PC-3 (cell line): ENCODE measurements at regions of chr1 and their contacts with region 1.

Region 1: DNA sequence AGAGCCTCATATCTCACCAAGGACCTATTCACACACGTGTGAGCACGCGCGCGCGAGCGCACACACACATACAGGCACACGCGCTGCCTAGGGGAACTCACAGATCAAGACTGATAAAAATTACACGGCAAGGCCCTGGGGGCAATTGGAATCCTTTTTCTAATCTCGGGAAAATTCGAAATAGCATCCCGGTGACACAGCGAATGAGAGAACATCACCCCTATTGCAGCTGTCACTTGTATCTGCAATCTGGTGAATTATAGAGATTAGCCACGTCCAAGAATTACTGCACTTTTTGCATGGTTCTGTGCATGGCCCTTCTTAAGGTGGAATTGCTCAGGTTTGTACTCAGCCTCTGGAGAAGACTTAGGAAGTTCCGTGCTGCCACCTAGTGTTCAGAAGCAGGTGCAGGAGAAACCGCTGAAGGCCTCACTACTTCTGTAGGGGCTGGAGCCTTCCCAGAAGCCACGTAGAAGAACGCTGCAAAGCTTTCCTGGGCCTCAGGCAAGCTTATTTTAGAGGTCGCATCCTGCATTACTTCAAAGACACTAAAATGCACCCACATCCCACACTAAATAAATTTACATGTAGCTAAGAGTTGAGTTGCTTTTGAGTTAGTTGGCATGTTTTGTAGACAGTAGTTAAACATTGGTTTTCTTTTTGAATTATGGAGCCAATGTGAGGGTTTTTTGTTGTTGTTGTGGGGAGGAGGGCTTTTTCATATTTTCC is 229.2 kb upstream of the CAMK1G start:
- DNase-seq: peak; percentile 98
- ATAC-seq: peak; percentile 93
- H3K4me3 ChIP-seq: no peak overlapping the region
- H3K27ac ChIP-seq: peak overlapping the region; percentile 19; the same call in 1 of the 2 replicates
- H3K4me1 ChIP-seq: peaks cover 36% of the 10 kb centered on the region
- H3K27me3 ChIP-seq: no peaks in the 10 kb centered on the region
- CTCF ChIP-seq: peak; percentile 97

Region 2: GRCh38 chr1:208652296-208653160 is 701.7 kb before region 1 on chr1:
- CTCF ChIA-PET with region 1: no interaction called
- POLR2A ChIA-PET with region 1: no interaction called
- intact Hi-C with region 1: loop called (anchors 1 kb)
- DNase-seq: peak; percentile 89
- ATAC-seq: peak; percentile 90
- H3K4me3 ChIP-seq: no peak overlapping the region
- H3K27ac ChIP-seq: no peak overlapping the region
- H3K4me1 ChIP-seq: peaks cover 19% of the 10 kb centered on the region
- H3K27me3 ChIP-seq: no peaks in the 10 kb centered on the region
- CTCF ChIP-seq: peak; percentile 95

Region 3: DNA sequence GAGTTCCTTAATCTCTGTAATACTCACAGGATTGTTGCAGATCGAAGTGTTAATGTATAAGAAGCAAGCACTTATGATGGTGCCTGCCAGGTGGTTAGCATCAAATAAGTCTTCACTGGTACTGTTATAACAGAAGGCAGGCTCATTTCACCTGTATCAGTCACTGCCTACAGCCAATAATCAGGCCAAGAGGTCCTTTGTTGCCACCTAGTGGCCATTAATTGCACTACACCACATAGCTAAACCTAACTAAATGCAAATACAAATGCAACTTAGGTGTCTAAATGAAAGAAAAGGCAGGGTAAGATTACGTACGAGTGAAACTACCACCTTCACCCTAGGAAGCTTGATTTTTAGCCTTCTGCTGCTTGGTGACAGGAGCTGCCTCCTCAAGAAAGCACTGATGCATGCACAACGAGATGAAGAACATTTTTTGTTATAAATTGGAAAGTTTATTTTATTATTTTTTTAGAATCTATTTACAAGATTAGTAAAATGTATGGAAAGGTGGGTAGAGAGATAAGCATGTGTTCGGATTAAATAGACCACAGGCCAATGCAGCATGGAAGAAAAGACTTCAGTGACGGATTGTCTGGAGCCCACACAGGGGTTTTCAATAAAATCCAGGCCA is 105.5 kb before region 1 on chr1:
- CTCF ChIA-PET with region 1: interaction called, 14 read pairs
- POLR2A ChIA-PET with region 1: no interaction called
- intact Hi-C with region 1: loop called (anchors 1 kb)
- DNase-seq: peak; percentile 97
- ATAC-seq: peak; percentile 58
- H3K4me3 ChIP-seq: no peak overlapping the region
- H3K27ac ChIP-seq: no peak overlapping the region
- H3K4me1 ChIP-seq: peaks cover 44% of the 10 kb centered on the region
- H3K27me3 ChIP-seq: no peaks in the 10 kb centered on the region
- CTCF ChIP-seq: peak; percentile 98

Region 4: GRCh38 chr1:209405183-209405814 is 51.0 kb after region 1 on chr1:
- CTCF ChIA-PET with region 1: no interaction called
- POLR2A ChIA-PET with region 1: interaction called, 6 read pairs
- intact Hi-C with region 1: loop called (anchors 2 kb)
- DNase-seq: peak; percentile 94
- ATAC-seq: peak; percentile 41
- H3K4me3 ChIP-seq: peak overlapping the region; percentile 53
- H3K27ac ChIP-seq: peak overlapping the region; percentile 96
- H3K4me1 ChIP-seq: peaks cover 71% of the 10 kb centered on the region
- H3K27me3 ChIP-seq: no peaks in the 10 kb centered on the region
- CTCF ChIP-seq: no peak

Region 5: DNA sequence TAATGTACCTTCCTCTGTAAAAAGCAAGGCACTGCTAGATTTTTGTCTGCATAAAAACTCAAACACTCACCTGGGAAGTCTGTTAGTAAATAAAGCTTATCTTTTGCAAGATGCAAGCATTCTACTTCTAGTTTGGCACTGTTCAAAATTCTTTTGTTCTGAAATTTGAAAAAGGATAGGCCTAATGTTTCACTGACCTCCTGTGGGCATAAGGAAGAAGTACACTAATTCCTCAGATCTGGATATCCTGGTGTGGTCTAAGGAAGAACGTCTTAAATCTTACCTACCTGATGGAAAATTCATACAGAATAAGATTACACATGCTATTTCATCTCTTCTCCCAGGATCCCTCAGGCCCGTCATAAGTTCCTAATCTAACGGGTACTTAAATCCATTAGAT is 135.7 kb after region 1 on chr1:
- CTCF ChIA-PET with region 1: interaction called, 3 read pairs
- POLR2A ChIA-PET with region 1: no interaction called
- intact Hi-C with region 1: loop called (anchors 1 kb)
- DNase-seq: peak; percentile 82
- ATAC-seq: peak; percentile 83
- H3K4me3 ChIP-seq: no peak overlapping the region
- H3K27ac ChIP-seq: no peak overlapping the region
- H3K4me1 ChIP-seq: peaks cover 14% of the 10 kb centered on the region; the same call in 1 of the 2 replicates
- H3K27me3 ChIP-seq: no peaks in the 10 kb centered on the region
- CTCF ChIP-seq: peak; percentile 94

Region 6: GRCh38 chr1:209565759-209566678 is 211.7 kb after region 1 on chr1:
- CTCF ChIA-PET with region 1: no interaction called
- POLR2A ChIA-PET with region 1: no interaction called
- intact Hi-C with region 1: loop called (anchors 5 kb)
- DNase-seq: peak; percentile 97
- ATAC-seq: peak; percentile 90
- H3K4me3 ChIP-seq: no peak overlapping the region
- H3K27ac ChIP-seq: no peak overlapping the region
- H3K4me1 ChIP-seq: peaks cover 22% of the 10 kb centered on the region
- H3K27me3 ChIP-seq: no peaks in the 10 kb centered on the region
- CTCF ChIP-seq: peak; percentile 96